Sigmoid colon (tissue), 7 donors: ENCODE measurements at regions of chr6 and their contacts with region 1.

Region 1: DNA sequence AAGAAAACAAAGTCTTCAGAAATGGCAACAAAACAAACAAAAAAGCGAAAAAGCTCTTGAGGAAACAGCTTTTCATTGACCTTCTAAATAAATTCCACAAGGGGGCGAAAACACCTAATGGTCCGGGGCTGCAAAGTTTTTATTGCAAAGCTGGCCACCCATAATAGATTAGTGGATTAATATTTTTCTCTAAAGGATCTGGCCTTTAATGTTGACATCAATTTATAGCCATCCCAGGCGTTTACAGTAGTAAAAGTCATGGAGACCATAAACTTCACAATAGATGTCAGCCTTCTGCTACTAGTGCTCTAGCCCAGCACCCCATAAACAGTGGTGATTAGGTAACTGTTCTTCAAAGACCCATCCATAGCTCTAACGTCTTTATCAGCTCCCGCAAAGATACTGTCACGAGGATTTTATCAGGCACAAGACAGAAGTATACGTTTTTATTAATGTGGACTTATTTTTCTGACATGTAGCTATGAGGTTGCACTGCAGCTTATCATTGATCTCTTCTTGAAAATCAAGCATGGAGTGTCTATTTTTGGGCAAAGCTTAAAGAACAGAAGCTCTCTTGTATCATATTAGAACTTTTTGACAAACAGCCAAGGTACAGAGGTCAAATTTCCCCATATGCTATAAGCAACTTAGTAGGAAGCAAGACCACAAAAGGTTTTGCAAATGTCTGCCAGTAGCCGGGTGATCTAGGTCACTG is 4.7 kb downstream of the CITED2 start:
- DNase-seq: no peak
- H3K4me3 ChIP-seq: peak overlapping the region; percentile 65 to 89 (median 86)
- H3K27ac ChIP-seq: peak overlapping the region; percentile 96 to 97 (median 97)
- H3K4me1 ChIP-seq: peaks cover 0 to 31% (median 19%) of the 10 kb centered on the region in 4 donors
- H3K27me3 ChIP-seq: no peaks in the 10 kb centered on the region
- CTCF ChIP-seq: peak; percentile 61 to 77 (median 70)
- EP300 ChIP-seq: peak in 2 of 4 donors; percentile 32 to 53
- POLR2A ChIP-seq: no peak

Region 2: DNA sequence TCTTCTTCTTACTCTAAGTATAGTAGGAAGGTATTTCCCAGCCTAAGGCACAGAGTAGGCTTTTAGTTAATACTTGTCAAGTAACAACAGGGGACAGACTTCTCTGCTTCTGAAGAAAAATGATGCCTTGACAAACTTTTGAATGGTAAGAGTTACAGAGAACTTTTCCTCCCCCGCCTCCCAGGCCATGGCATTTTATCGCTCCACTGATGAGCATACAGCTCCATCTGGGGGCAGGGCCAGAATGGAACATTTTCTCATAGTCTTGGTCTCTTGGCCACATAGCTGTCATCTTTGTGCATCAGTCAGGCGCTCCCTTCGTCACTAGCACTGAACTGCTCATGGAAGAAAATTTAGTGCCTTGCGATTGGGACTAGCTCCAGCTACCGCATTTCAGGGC is 1071.5 kb after region 1 on chr6:
- intact Hi-C with region 1: loop called (anchors 2 kb)
- DNase-seq: peak; percentile 66
- H3K4me3 ChIP-seq: no peak overlapping the region
- H3K27ac ChIP-seq: no peak overlapping the region
- H3K4me1 ChIP-seq: peaks cover 0 to 38% (median 15%) of the 10 kb centered on the region in 4 donors
- H3K27me3 ChIP-seq: no peaks in the 10 kb centered on the region
- CTCF ChIP-seq: peak in 3 of 4 experiments; percentile 14 to 38 (median 23)
- EP300 ChIP-seq: no peak
- POLR2A ChIP-seq: no peak